ENCODE measurements at regions of chr1 and their contacts with region 1.

Region 1: DNA sequence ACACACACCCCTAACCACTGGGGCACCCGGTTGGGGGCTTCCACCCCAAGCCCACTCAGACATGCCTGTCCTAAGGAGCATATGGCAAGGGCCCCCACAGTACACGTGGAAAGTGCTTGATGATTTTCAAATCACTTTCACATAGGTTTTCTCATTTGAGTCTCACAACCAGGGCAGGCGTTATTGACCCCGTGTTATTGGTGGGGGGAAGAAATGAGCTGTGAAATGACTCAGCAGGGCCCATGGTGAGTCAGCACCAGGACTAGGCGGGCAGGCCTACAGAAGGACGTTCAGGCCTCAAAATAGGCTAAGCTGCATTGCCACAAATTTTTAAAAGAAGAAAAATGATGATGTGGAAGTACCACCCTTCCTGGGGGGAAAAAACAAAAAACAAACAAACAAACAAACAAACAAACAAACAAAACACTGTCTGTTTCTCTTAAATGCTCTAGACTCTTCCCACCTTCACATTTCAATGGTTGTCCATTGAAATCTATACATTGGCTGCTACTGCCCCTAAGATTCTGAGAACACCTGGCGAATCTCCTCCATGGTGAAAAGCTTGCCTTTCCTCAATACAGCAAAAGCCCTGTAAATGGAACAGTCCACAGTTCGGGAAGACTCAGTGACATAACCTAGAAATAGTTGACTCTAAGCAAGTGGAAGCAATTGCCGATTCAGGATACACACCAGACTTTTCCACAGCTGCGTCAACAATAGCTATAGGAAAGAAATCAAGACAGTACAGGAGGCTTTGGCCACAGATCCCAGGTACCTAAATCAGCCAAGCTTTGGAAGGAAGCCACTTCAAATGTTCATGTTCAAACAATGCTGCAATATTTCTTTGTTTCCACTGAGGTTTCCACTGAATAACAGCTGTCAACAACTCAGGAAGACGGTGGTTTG is 234.7 kb downstream of the TOMM20 start:
- DNase-seq: no peak
- ATAC-seq: peak; percentile 90
- H3K4me3 ChIP-seq: no peak overlapping the region
- H3K27ac ChIP-seq: no peak overlapping the region
- H3K4me1 ChIP-seq: peaks cover 4% of the 10 kb centered on the region; the same call in 1 of the 2 replicates
- H3K27me3 ChIP-seq: no peaks in the 10 kb centered on the region
- CTCF ChIP-seq: no peak
- EP300 ChIP-seq: no peak
- POLR2A ChIP-seq: no peak
- RAD21 ChIP-seq: no peak

Region 2: GRCh38 chr1:234907940-234908405 is 14.0 kb after region 1 on chr1:
- CTCF ChIA-PET with region 1: interaction called, 6 read pairs
- POLR2A ChIA-PET with region 1: no interaction called
- RAD21 ChIA-PET with region 1: no interaction called
- SMC1A ChIA-PET with region 1: interaction called, 11 read pairs
- in situ Hi-C with region 1: no loop called
- intact Hi-C with region 1: no loop called
- DNase-seq: no peak
- ATAC-seq: no peak
- H3K4me3 ChIP-seq: no peak overlapping the region
- H3K27ac ChIP-seq: no peak overlapping the region
- H3K4me1 ChIP-seq: peaks cover under 1% of the 10 kb centered on the region; the same call in 1 of the 2 replicates
- H3K27me3 ChIP-seq: no peaks in the 10 kb centered on the region
- CTCF ChIP-seq: no peak
- EP300 ChIP-seq: no peak
- POLR2A ChIP-seq: no peak
- RAD21 ChIP-seq: no peak